Activated CD4-positive, alpha-beta memory T cell treated with anti-CD3 and anti-CD28 coated beads for 36 hours (primary cell): ENCODE measurements at regions of chr1 and their contacts with region 1.

Region 1: GRCh38 chr1:206496131-206496793 is 11.1 kb upstream of the RASSF5 start:
- DNase-seq: no peak
- H3K4me3 Mint-ChIP-seq: no peak overlapping the region
- H3K27ac Mint-ChIP-seq: peak overlapping the region; percentile 67
- H3K4me1 Mint-ChIP-seq: peaks cover 8% of the 10 kb centered on the region
- H3K27me3 Mint-ChIP-seq: no peaks in the 10 kb centered on the region

Region 2: DNA sequence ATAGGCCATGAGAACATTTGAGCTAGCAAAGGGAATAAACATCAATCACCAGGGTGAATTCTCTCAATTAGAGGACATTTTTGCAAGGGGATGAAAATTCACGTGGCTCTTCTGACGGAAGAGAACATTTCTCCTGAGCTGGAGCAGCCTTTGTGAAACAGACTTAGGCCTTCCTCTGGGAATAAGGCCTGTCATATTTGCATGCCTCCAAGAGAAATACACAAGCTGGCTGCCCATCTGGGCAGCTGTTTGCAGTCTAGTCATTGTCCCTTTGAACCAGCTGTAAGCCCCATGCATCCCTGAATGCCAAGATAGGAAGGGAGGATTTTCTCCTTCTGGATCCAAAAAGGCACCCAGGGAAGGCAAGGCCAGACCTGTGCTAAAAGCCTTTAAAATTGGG is 1079.9 kb before region 1 on chr1:
- CTCF ChIA-PET with region 1: no interaction called
- POLR2A ChIA-PET with region 1: no interaction called
- intact Hi-C with region 1: no loop called
- DNase-seq: no peak
- H3K4me3 Mint-ChIP-seq: no peak overlapping the region
- H3K27ac Mint-ChIP-seq: no peak overlapping the region
- H3K4me1 Mint-ChIP-seq: no peaks in the 10 kb centered on the region
- H3K27me3 Mint-ChIP-seq: peaks cover 4% of the 10 kb centered on the region

Region 3: DNA sequence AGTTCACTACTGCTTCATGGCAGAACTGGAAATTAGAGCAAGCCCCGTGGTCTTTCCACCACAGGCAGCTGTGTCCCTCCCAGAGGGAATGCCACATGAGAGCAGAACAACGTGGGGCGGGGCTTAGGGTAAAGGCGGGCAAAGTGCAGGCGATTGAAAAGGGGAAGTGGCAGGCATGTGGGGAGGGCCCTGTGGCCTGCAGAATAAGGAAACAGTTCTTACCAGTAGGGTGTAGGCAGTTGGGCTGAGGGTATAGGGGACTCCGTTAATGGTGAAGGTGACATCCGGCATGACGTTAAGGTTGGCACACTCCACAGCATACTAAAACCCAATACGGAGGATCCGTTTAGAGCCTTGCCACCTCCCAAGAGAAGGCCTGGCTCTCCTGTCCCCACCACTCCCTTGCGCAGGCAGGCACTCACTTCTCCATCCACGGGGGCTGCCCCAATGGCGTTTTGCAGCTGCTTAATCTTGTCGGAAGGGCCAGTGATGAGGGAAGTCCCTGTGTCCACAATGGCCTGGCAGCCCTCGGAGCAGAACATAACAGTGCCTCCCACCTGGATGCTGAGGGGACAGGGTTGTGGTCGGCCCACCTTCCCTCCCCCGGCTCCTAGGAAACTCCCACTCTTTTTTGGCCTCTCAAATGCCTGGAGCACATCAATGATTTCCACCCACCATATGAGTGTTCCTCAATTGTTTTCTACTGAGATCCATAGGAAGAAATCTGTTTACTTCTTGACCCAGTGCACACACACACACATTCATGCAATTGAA is 484.0 kb before region 1 on chr1:
- CTCF ChIA-PET with region 1: no interaction called
- POLR2A ChIA-PET with region 1: no interaction called
- intact Hi-C with region 1: no loop called
- DNase-seq: peak; percentile 49
- H3K4me3 Mint-ChIP-seq: no peak overlapping the region
- H3K27ac Mint-ChIP-seq: no peak overlapping the region
- H3K4me1 Mint-ChIP-seq: peaks cover 22% of the 10 kb centered on the region
- H3K27me3 Mint-ChIP-seq: peaks cover 4% of the 10 kb centered on the region

Region 4: GRCh38 chr1:206479183-206480125 is 16.8 kb before region 1 on chr1:
- CTCF ChIA-PET with region 1: interaction called, 63 read pairs
- POLR2A ChIA-PET with region 1: interaction called, 3 read pairs
- intact Hi-C with region 1: no loop called
- DNase-seq: peak; percentile 79
- H3K4me3 Mint-ChIP-seq: no peak overlapping the region
- H3K27ac Mint-ChIP-seq: peak overlapping the region; percentile 26
- H3K4me1 Mint-ChIP-seq: peaks cover 37% of the 10 kb centered on the region
- H3K27me3 Mint-ChIP-seq: no peaks in the 10 kb centered on the region